ENCODE measurements at regions of chr4 and their contacts with region 1.

Region 1: DNA sequence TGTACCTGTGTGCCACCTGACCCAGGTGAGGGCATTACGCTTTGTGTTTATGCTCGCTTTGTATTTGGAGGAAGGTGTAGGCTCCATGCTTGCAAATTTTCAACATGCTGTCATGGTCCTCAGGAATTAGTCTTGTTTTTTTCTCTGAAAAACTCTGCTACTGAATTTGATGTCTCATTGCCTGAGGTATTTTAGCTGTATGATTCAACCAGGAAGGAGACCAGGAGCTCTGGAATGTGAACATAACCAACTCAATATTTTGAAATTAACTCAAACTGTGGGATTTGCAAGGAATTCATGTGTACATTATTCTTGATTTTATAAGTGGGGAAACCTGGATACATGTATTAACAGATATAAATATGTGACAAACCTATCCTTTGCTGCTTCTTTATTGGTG is 134.1 kb downstream of the SLC4A4 start:
- DNase-seq: no peak
- ATAC-seq: no peak
- H3K4me3 ChIP-seq: no peak overlapping the region
- H3K27ac ChIP-seq: no peak overlapping the region
- H3K4me1 ChIP-seq: no peaks in the 10 kb centered on the region
- H3K27me3 ChIP-seq: no peaks in the 10 kb centered on the region

Region 2: GRCh38 chr4:71266090-71266794 is 206.7 kb before region 1 on chr4:
- intact Hi-C with region 1: loop called in 1 of 2 experiments (anchors 10 kb)
- DNase-seq: no peak
- ATAC-seq: no peak
- H3K4me3 ChIP-seq: no peak overlapping the region
- H3K27ac ChIP-seq: no peak overlapping the region
- H3K4me1 ChIP-seq: no peaks in the 10 kb centered on the region
- H3K27me3 ChIP-seq: no peaks in the 10 kb centered on the region

Measured in aorta (tissue), 5 donors.